PC-3 (cell line): ENCODE measurements at regions of chr6 and their contacts with region 1.

Region 1: DNA sequence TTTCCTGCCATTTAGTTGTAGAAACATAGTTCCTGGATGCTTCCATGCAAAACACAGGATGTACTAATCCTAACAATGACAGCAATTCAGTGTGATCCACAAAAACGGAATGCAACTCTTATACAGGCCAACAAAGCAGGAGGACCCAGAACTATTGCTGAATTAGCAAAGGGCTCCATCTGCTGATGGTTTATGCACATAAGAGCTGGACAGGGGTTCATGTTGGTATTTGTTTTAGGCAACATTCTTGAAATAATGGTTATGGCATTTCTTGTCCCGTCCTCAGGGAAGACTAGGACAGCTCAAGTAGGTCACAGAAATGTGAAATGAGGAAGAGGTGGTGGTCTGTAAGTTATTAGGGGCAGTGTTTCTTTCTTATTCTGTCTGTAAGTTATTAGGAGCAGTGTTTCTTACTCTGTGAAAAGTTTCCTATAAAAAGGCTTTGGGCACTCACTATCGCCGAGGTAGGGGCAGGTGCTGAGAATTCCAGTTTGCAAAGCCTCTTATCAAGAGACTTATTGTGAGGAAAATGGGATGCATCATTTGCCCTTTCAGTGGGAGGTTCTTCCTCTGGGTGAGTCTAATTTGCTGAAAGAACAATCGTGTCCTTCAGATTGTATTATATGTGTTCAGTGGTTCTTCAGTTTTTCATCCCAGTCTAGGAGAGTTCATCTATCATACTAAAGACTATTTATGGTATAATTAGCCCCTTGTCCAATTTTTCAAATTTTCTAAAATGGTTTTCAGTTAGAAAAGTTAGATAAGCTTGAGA is 171.1 kb downstream of the MCHR2 start:
- DNase-seq: peak; percentile 66
- ATAC-seq: peak; percentile 92
- H3K4me3 ChIP-seq: peak overlapping the region; percentile 59
- H3K27ac ChIP-seq: no peak overlapping the region
- H3K4me1 ChIP-seq: no peaks in the 10 kb centered on the region
- H3K27me3 ChIP-seq: no peaks in the 10 kb centered on the region
- CTCF ChIP-seq: peak; percentile 74

Region 2: GRCh38 chr6:99588618-99589289 is 234.2 kb before region 1 on chr6:
- CTCF ChIA-PET with region 1: interaction called, 3 read pairs
- POLR2A ChIA-PET with region 1: no interaction called
- intact Hi-C with region 1: loop called (anchors 5 kb)
- DNase-seq: peak; percentile 67
- ATAC-seq: peak; percentile 98
- H3K4me3 ChIP-seq: peak overlapping the region; percentile 85
- H3K27ac ChIP-seq: no peak overlapping the region
- H3K4me1 ChIP-seq: no peaks in the 10 kb centered on the region
- H3K27me3 ChIP-seq: peaks cover 17% of the 10 kb centered on the region
- CTCF ChIP-seq: peak; percentile 63

Region 3: DNA sequence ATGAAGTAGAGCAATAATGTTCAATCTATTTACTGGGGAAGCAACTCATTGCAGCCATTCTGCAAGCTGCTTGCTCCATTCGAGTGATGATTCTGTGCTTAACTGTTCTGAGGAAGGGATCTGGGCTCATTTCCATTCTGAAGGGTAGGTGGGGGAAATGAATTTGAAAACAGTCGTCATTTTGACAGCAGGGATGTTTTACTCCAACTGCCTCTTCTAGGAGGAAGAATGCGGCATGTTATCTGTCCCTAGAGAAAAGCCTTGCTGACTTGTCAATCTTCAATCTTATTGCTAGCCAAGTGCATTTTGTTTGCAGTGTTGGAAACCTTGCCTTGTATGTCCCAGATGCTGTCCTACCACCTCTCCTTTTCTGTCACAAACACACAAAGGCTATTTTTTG is 110.4 kb before region 1 on chr6:
- CTCF ChIA-PET with region 1: no interaction called
- POLR2A ChIA-PET with region 1: no interaction called
- intact Hi-C with region 1: no loop called
- DNase-seq: no peak
- ATAC-seq: no peak
- H3K4me3 ChIP-seq: no peak overlapping the region
- H3K27ac ChIP-seq: no peak overlapping the region
- H3K4me1 ChIP-seq: no peaks in the 10 kb centered on the region
- H3K27me3 ChIP-seq: no peaks in the 10 kb centered on the region
- CTCF ChIP-seq: no peak